Activated CD4-positive, alpha-beta T cell treated with anti-CD3 and anti-CD28 coated beads for 36 hours (primary cell): ENCODE measurements at regions of chr6 and their contacts with region 1.

Region 1: GRCh38 chr6:43506667-43507471 is 3.3 kb downstream of the LRRC73 start:
- DNase-seq: peak; percentile 89
- ATAC-seq: peak; percentile 83
- H3K4me3 Mint-ChIP-seq: no peak overlapping the region
- H3K27ac Mint-ChIP-seq: no peak overlapping the region
- H3K4me1 Mint-ChIP-seq: peaks cover 7% of the 10 kb centered on the region
- H3K27me3 Mint-ChIP-seq: peaks cover 12% of the 10 kb centered on the region

Region 2: DNA sequence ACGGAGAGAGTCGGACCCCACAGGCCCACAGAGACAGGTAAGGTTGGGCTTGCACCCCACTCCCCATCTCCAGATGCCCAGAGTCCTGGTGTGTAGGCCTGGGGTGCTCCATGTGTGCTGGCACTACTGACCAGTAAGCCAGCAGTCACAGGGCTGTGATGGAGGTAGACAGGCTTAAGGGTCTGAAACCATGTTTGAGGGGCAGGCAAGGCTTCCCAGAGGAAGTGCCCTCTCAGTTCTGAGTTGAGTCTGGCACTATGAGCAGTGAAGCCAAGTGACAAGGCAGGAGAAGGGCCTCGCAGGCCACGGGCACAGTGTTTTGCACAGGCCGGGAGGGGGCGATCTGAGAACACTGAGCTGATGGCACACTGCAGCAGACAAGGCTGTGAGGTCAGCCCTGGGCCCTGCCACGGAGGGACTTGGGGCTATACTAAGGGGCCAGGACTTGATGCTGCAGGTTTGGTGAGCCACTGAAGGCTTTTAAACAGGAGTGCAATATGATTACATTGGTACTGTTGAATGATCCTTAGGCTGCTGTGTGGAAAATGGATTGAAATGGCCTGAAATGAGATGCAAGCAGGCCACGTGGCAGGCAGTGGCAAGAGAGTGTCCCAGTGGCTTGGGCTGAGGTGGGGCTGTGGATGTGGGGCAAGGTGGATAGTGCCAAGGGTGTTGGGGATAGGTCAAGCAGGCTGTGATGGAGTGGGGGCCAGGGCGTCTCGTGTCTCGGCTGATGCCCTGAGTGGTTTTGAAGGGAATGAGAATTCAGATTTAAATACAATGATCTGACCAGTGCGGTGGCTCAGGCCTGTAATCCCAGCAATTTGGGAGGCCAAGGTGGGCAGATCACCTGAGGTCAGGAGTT is 243.3 kb before region 1 on chr6:
- CTCF ChIA-PET with region 1: interaction called, 21 read pairs
- POLR2A ChIA-PET with region 1: no interaction called
- intact Hi-C with region 1: loop called (anchors 1 kb)
- DNase-seq: peak; percentile 89
- ATAC-seq: peak; percentile 99
- H3K4me3 Mint-ChIP-seq: no peak overlapping the region
- H3K27ac Mint-ChIP-seq: no peak overlapping the region
- H3K4me1 Mint-ChIP-seq: peaks cover 3% of the 10 kb centered on the region
- H3K27me3 Mint-ChIP-seq: no peaks in the 10 kb centered on the region

Region 3: DNA sequence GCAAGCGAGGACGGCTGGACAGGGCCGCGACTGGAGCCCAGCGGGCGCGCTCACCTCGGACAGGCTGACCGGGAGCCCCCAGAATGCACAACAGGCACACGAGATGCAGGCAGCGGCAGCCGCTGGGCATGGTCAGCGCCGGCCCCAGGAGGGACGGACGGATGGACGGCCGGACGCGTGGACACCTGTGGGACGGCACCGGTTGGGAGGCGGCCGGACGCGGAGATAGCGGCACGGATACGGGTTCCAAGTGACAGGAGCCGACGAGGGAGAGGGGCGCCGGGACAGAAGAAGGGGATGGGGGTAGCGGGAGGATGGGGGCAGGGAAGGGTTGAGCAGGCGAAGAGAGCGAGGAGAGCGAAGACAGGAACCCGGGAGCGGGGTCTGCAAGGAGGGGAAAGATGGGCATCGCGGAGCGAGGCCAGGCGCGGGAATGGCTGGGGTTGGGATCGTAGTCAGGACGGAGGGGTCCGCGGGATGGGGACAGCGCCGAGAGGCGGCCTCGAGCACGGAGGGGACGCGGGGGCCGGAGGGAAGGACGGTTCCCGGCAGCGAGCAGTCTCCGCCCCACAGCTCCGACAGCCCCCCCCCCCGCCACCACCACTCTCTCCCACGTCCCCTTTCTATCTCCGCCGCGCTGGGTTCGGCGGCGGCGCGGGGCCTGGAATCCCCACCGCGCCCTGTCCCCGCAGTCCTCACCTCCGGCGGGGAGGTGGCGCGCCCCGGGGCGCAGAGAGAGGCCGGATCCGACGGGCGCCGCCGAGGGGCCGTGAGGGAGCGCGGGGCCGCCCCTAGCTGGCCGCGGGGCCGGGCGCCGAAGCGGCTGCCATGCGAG is 52.0 kb before region 1 on chr6:
- CTCF ChIA-PET with region 1: interaction called, 33 read pairs
- POLR2A ChIA-PET with region 1: no interaction called
- intact Hi-C with region 1: loop called (anchors 1 kb)
- DNase-seq: peak; percentile 46
- ATAC-seq: peak; percentile 67
- H3K4me3 Mint-ChIP-seq: peak overlapping the region; percentile 72
- H3K27ac Mint-ChIP-seq: no peak overlapping the region
- H3K4me1 Mint-ChIP-seq: peaks cover 15% of the 10 kb centered on the region
- H3K27me3 Mint-ChIP-seq: peaks cover 3% of the 10 kb centered on the region

Region 4: DNA sequence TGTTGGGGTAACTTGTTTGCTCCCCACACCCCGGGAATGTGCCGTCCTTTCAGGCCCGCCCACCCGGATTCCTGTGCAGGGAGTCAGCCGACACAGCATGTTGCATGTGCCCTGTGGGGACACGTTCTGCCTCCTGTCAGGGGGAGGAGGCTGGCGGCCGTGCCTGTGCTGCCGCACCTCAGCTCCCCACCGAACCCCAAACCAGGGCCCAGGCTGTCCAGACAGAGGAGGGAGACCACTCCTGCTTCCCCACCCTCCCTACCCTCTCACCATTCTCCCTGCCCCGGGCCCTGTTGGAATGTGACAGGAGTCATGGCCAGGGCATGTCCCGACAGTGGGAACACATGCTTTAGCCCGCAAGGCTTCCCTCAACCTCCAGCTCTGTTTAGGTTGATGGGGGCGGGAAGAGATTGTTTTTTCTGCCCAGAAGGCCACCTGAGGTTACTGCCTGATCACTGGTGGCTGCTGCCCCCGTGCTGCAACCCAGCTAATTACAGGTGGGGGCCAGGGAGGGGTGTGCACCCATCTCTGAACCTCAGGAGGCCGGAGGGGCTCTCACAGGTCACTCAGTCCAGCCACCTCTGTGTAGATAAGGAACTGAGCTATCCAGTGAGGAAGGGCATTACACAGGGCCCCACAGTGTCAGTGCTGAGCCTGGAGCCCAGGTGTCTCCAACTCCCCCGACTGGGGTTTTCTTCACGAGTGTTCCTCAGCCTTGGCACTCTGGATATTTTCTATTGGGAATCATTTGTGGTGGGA is 10.3 kb before region 1 on chr6:
- CTCF ChIA-PET with region 1: interaction called, 65 read pairs
- POLR2A ChIA-PET with region 1: no interaction called
- intact Hi-C with region 1: no loop called
- DNase-seq: peak; percentile 46
- ATAC-seq: peak; percentile 45
- H3K4me3 Mint-ChIP-seq: no peak overlapping the region
- H3K27ac Mint-ChIP-seq: no peak overlapping the region
- H3K4me1 Mint-ChIP-seq: peaks cover 17% of the 10 kb centered on the region
- H3K27me3 Mint-ChIP-seq: no peaks in the 10 kb centered on the region

Region 5: DNA sequence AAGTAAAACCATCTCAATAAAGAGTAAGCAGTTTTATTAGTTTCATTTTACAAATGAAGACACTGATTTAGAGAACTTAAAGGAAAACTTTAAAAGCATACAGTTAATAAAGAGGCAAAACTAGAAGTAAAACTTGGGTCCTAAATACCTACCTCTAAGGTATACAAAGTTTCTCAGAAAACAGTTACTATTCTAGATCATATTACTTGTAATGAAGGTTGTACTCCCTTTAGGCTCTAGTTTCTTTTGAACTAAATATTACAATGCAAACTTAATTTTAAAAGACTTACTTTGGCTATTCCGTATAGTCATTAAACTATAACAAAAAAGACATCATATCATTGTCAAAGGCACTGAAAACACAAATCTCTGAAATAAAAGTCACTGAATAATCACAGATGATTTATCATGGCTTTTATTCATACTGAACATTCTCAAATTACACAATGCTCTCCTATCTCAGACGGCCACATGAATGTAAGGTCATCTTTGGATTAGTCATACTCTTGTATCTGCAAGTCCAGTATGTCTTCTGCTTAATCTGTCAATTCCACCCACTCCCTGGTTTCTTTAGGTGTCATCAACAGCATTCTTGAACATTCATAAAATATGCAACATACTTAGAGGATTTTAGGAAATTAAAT is 1459.7 kb after region 1 on chr6:
- CTCF ChIA-PET with region 1: no interaction called
- POLR2A ChIA-PET with region 1: no interaction called
- intact Hi-C with region 1: no loop called
- DNase-seq: no peak
- ATAC-seq: no peak
- H3K4me3 Mint-ChIP-seq: no peak overlapping the region
- H3K27ac Mint-ChIP-seq: no peak overlapping the region
- H3K4me1 Mint-ChIP-seq: peaks cover 23% of the 10 kb centered on the region
- H3K27me3 Mint-ChIP-seq: no peaks in the 10 kb centered on the region